Calu3 (cell line): ENCODE measurements at regions of chr12 and their contacts with region 1.

Region 1: DNA sequence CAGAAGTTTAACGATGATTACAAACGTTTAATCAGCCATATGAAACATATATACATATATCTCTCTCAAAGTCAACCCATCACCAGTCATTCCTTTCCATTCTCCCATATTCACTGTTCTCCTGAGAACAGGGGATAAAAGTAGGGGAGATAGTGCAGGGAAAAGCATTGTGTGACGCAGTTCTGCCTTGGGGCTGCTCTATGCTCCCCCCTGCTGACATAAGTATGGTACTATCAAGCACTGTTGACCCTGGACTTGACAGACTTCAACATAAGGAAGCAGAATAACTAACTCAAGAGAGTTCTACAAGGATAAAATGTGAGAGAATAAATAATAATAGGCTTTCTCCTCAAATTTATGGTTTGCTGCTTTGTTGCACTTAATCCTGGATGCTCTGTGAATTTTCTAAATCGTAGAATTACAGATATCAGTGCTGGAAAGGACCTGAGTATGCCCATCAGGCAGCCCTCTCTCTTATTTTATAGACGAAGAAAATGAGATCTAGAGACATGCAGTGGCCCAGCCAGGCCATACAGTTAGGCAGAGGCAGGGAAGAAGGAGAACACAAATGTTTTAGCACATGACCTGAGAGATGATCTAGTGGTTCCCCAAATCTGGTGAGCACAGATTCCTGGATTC is 87.2 kb downstream of the SCN8A start:
- DNase-seq: peak; percentile 45
- H3K4me3 Mint-ChIP-seq: no peak overlapping the region
- H3K27ac Mint-ChIP-seq: no peak overlapping the region
- H3K4me1 Mint-ChIP-seq: peaks cover 18% of the 10 kb centered on the region
- H3K27me3 Mint-ChIP-seq: no peaks in the 10 kb centered on the region
- CTCF ChIP-seq: peak; percentile 46

Region 2: GRCh38 chr12:51531978-51532497 is 146.2 kb before region 1 on chr12:
- CTCF ChIA-PET with region 1: interaction called, 4 read pairs
- intact Hi-C with region 1: loop called (anchors 5 kb)
- DNase-seq: peak; percentile 70
- H3K4me3 Mint-ChIP-seq: no peak overlapping the region
- H3K27ac Mint-ChIP-seq: no peak overlapping the region
- H3K4me1 Mint-ChIP-seq: peaks cover 12% of the 10 kb centered on the region
- H3K27me3 Mint-ChIP-seq: peaks cover 28% of the 10 kb centered on the region
- CTCF ChIP-seq: peak; percentile 54

Region 3: GRCh38 chr12:51601241-51601640 is 77.0 kb before region 1 on chr12:
- CTCF ChIA-PET with region 1: no interaction called
- intact Hi-C with region 1: loop called (anchors 5 kb)
- DNase-seq: no peak
- H3K4me3 Mint-ChIP-seq: no peak overlapping the region
- H3K27ac Mint-ChIP-seq: no peak overlapping the region
- H3K4me1 Mint-ChIP-seq: no peaks in the 10 kb centered on the region
- H3K27me3 Mint-ChIP-seq: no peaks in the 10 kb centered on the region
- CTCF ChIP-seq: no peak